ENCODE measurements at regions of chr1 and their contacts with region 1.

Region 1: GRCh38 chr1:119743781-119744597 is 24.7 kb downstream of the HMGCS2 start:
- DNase-seq: no peak
- ATAC-seq: peak; percentile 60 to 69
- H3K4me3 ChIP-seq: no peak overlapping the region
- H3K27ac ChIP-seq: no peak overlapping the region
- H3K4me1 ChIP-seq: no peaks in the 10 kb centered on the region
- H3K27me3 ChIP-seq: no peaks in the 10 kb centered on the region
- CTCF ChIP-seq: peak; percentile 36 to 75 (median 65)
- POLR2A ChIP-seq: no peak

Region 2: DNA sequence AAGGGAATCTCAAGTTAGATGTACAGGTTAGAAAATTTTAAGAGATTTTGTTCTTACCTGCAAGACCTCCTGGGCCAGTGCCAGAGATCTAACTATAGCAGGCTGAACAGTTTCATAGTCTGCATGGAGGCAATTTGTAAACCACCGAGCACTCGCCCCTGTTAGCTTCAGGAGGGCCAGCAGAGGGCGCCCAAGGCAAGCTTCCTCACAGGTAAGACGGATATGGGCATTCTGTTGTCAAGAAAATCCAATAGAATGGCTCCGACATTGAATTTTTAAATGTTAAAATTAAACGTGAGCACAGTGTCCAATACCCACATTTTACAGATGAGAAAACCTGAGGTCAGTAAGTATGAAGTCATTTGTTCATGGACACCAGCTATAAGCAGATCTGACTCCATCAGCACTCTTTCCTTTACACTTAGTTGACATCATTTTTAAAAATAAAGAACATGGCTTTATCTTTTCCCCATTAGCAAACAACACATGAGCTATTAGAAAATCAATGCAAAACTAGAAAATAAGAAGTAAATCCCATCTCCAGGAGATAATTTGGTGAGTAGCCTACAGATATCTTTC is 65.1 kb after region 1 on chr1:
- in situ Hi-C with region 1: no loop called
- intact Hi-C with region 1: loop called (anchors 5 kb)
- DNase-seq: peak; percentile 24 to 38
- ATAC-seq: peak; percentile 60 to 65
- H3K4me3 ChIP-seq: no peak overlapping the region
- H3K27ac ChIP-seq: no peak overlapping the region
- H3K4me1 ChIP-seq: no peaks in the 10 kb centered on the region
- H3K27me3 ChIP-seq: peaks cover 0 to 3% (median 0%) of the 10 kb centered on the region in 3 donors
- CTCF ChIP-seq: peak; percentile 45 to 85 (median 54)
- POLR2A ChIP-seq: no peak

Region 3: DNA sequence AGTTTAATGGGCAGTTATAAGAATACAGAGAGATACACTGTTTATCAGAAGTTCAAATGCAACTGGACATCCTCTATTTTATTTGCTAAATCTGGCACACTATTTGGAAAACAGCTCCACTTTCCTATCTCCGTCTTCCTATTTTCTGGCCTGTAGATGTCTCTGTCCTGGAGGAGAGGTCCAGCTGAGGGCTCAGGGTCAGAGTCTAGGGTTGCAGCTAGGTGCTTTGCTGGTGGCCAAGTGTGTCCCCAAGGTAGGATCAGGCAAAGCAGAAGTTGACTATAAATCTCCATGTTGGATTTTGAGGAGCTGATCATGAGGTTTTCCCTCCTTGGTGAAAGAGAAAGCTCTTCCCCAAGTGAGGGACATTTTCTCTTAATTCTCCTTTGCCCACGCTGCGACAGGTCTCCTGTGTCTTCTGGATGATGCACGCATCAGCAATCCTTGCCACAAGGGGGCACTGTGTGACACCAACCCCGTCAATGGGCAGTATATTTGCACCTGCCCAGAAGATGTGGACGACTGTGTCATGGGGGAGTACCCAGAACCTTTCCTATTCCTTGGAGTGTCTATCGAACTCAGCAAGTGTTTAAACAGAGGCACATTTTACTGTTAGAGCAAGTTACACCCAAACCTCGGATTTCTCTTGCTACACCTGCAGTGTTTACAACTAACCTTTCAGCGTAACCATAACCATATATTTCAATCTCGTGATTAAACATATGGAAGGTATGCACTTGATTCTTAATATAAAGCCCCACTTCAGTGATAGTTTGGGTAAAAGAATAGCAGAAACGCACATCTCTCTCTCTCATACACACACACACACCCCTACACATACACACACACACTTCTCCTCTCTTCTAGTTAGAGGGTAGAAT is 142.2 kb after region 1 on chr1:
- in situ Hi-C with region 1: no loop called
- intact Hi-C with region 1: no loop called
- DNase-seq: peak in 1 of 2 donors; percentile 31
- ATAC-seq: no peak
- H3K4me3 ChIP-seq: no peak overlapping the region
- H3K27ac ChIP-seq: no peak overlapping the region
- H3K4me1 ChIP-seq: no peaks in the 10 kb centered on the region
- H3K27me3 ChIP-seq: no peaks in the 10 kb centered on the region
- CTCF ChIP-seq: peak; percentile 19 to 63 (median 38)
- POLR2A ChIP-seq: no peak